Prostate gland (tissue), 2 donors: ENCODE measurements at regions of chr2 and their contacts with region 1.

Region 1: GRCh38 chr2:11344342-11344955 is at the start of gene ROCK2:
- DNase-seq: peak; percentile 86
- H3K4me3 ChIP-seq: peak within 1 kb of the TSS; percentile 89 to 93
- H3K27ac ChIP-seq: peak within 1 kb of the TSS; percentile 96 to 97
- H3K4me1 ChIP-seq: no peaks in the 10 kb centered on the region
- H3K27me3 ChIP-seq: no peaks in the 10 kb centered on the region
- CTCF ChIP-seq: peak in 1 of 4 experiments; percentile 4
- POLR2A ChIP-seq: peak; percentile 33
- total RNA-seq, gene ROCK2: 29.6 to 32.2 TPM

Region 2: DNA sequence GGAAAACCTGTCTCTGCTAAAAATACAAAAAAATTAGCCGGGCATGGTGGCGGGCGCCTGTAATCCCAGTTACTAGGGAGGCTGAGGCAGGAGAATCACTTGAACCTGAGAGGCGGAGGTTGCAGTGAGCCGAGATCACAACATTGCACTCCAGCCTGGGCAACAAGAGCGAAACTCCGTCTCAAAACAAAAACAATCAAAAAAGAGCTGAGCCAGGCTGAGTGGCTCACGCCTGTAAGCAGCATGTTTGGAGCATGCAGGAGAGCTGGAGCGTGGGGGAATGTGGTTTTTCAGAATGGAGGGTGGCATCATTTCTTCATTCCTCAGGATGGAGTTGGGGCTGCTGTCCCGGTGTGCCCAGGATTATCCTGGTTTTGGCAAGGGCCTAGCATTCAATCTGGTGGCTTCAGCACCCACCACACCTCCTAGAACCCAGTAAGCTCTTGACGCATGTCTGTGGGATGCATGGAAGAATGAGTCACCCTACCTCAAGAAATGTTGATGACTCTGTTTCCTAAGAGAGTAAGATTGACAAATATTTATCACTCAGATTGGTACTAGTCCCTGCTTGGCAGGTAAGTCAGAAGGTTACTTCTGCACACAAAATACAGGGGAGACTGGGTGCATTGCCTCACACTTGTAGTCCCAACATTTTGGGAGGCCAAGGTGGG is 806.1 kb before region 1 on chr2:
- intact Hi-C with region 1: no loop called
- DNase-seq: no peak
- H3K4me3 ChIP-seq: no peak overlapping the region
- H3K27ac ChIP-seq: no peak overlapping the region
- H3K4me1 ChIP-seq: no peaks in the 10 kb centered on the region
- H3K27me3 ChIP-seq: no peaks in the 10 kb centered on the region
- CTCF ChIP-seq: no peak
- POLR2A ChIP-seq: no peak

Region 3: DNA sequence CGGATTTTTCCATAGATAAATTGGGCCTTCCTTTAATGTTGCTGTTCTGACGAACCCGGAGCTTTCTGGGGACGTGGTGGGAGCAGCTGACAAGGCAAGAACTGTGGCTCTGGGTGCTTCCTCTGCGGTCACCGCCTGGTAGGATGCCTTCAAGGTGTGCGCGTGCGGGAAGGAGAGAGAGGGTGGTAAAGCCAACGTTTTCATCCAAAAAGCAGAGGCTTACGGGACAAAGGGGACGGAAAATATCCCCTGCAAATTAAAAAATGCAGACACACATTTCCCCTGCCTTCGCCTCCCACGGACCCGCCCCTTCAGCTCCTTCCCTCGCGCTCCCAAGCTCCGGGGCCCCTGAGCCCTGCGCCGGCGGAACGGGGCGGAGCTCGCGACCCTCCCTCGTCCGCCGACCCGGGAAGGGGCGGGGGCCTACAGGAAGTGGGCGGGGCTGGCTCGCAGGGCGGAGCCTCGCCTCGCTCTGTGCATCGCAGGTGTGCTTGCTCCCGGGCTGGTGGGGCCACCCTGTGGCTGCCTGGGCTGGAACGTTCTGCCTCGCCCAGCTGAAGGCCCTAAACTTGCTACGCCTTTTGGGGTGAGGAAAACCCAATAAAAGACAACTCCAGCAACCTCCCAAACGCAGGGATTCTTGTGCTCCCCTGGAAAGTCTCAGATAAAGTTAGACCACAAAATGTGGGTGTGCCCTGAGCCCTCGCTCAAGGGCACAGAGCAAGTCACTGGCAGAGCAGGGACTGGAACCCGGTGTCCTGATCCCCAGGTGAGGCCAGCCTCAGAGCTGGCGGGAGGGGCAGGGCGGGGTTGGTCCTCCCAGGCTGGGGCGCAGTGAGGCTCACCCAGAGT is 214.6 kb before region 1 on chr2:
- intact Hi-C with region 1: loop called (anchors 5 kb)
- DNase-seq: peak; percentile 76
- H3K4me3 ChIP-seq: peak overlapping the region; percentile 25 to 32
- H3K27ac ChIP-seq: peak overlapping the region; percentile 52 to 60
- H3K4me1 ChIP-seq: peaks cover 7% of the 10 kb centered on the region
- H3K27me3 ChIP-seq: no peaks in the 10 kb centered on the region
- CTCF ChIP-seq: peak in 3 of 4 experiments; percentile 30 to 62 (median 57)
- POLR2A ChIP-seq: peak; percentile 24

Region 4: DNA sequence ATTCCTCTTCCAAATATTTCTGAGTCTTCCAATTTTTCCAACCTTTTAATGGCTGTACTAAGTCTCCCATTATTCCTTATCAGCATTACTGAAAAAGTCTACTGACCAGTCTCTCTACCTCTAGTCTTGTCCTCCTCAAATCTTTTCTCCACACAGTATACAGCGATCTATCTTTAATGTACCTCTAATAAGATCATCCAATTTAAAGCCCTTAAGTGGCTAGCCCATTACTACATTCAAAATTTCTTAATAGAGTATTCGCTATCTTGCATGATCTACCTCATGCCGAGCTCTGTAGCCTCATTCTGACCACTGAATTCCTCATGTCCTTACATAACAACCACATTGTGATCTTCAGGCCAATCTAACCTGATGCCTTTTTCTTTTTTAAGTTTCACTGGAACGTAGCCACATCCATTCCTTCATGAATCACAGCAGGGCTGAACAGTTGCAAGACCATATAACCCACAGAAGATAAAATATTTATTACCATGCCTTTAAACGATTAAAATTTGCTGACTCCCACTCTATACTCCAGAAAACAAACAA is 131.3 kb before region 1 on chr2:
- intact Hi-C with region 1: no loop called
- DNase-seq: no peak
- H3K4me3 ChIP-seq: no peak overlapping the region
- H3K27ac ChIP-seq: no peak overlapping the region
- H3K4me1 ChIP-seq: no peaks in the 10 kb centered on the region
- H3K27me3 ChIP-seq: no peaks in the 10 kb centered on the region
- CTCF ChIP-seq: no peak
- POLR2A ChIP-seq: no peak

Region 5: GRCh38 chr2:11239666-11240462 is 104.6 kb before region 1 on chr2:
- intact Hi-C with region 1: loop called (anchors 5 kb)
- DNase-seq: no peak
- H3K4me3 ChIP-seq: no peak overlapping the region
- H3K27ac ChIP-seq: no peak overlapping the region
- H3K4me1 ChIP-seq: no peaks in the 10 kb centered on the region
- H3K27me3 ChIP-seq: no peaks in the 10 kb centered on the region
- CTCF ChIP-seq: no peak
- POLR2A ChIP-seq: no peak

Region 6: GRCh38 chr2:11375025-11375688 is 30.7 kb after region 1 on chr2:
- intact Hi-C with region 1: loop called (anchors 2 kb)
- DNase-seq: no peak
- H3K4me3 ChIP-seq: no peak overlapping the region
- H3K27ac ChIP-seq: peak overlapping the region; percentile 72 to 73
- H3K4me1 ChIP-seq: no peaks in the 10 kb centered on the region
- H3K27me3 ChIP-seq: no peaks in the 10 kb centered on the region
- CTCF ChIP-seq: no peak
- POLR2A ChIP-seq: no peak

Region 7: GRCh38 chr2:11389551-11390528 is 45.4 kb after region 1 on chr2:
- intact Hi-C with region 1: loop called (anchors 5 kb)
- DNase-seq: peak; percentile 72
- H3K4me3 ChIP-seq: no peak overlapping the region
- H3K27ac ChIP-seq: no peak overlapping the region
- H3K4me1 ChIP-seq: peaks cover 12% of the 10 kb centered on the region
- H3K27me3 ChIP-seq: no peaks in the 10 kb centered on the region
- CTCF ChIP-seq: no peak
- POLR2A ChIP-seq: no peak

Region 8: GRCh38 chr2:11411768-11412448 is 67.5 kb after region 1 on chr2:
- intact Hi-C with region 1: loop called (anchors 2 kb)
- DNase-seq: peak; percentile 32
- H3K4me3 ChIP-seq: no peak overlapping the region
- H3K27ac ChIP-seq: no peak overlapping the region
- H3K4me1 ChIP-seq: no peaks in the 10 kb centered on the region
- H3K27me3 ChIP-seq: no peaks in the 10 kb centered on the region
- CTCF ChIP-seq: peak; percentile 61 to 78 (median 68)
- POLR2A ChIP-seq: no peak